ENCODE measurements at regions of chr20 and their contacts with region 1.

Region 1: DNA sequence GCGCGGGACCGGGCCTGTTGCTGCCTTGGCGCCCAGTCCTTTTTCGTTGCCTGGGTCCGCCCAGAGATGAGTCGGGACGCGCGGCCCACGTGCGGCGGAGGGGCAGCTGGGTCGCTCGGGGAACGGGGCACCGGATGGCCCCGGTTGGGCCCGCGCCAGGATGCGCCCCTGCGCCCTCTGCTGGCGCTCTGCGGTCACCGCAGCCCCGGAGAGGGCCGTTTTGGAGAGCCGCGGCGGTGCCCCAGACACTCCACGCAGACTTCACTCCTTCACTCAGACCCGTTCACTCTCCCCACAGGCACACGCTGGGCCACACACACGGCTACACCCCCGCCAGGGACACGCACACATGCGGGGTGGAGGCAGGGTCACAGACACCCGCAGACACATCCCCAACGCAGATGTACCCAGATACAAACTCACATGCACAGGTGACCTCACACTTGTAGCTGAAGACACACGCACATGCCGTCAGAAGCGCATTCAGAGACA is 38.8 kb downstream of the SRC start:
- DNase-seq: peak; percentile 81
- ATAC-seq: peak; percentile 96
- H3K4me3 Mint-ChIP-seq: peak overlapping the region; percentile 49
- H3K27ac Mint-ChIP-seq: peak overlapping the region; percentile 63
- H3K4me1 Mint-ChIP-seq: peaks cover 12% of the 10 kb centered on the region
- H3K27me3 Mint-ChIP-seq: peaks cover 5% of the 10 kb centered on the region
- CTCF ChIP-seq: peak; percentile 93

Region 2: DNA sequence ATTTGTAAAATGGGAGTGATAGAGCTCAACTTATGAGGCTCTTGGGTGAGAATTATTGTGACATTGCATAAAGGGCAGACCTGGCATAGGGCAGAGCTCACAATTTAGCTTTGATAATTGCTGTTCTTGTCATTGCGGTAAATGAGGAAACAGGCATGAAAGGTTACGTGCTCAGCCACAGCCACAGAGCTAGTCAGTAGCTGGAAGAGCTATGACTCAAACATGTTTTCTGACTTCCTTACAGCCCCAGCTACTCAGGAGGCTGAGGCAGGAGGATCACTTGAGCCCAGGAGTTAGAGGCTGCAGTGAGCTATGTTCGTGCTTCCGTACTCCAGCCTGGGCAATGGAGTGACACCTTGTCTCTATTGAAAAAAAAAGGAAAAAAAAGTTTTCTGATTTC is 119.6 kb before region 1 on chr20:
- CTCF ChIA-PET with region 1: interaction called, 28 read pairs
- POLR2A ChIA-PET with region 1: no interaction called
- intact Hi-C with region 1: loop called (anchors 5 kb)
- DNase-seq: peak; percentile 64
- ATAC-seq: peak; percentile 80
- H3K4me3 Mint-ChIP-seq: no peak overlapping the region
- H3K27ac Mint-ChIP-seq: no peak overlapping the region
- H3K4me1 Mint-ChIP-seq: no peaks in the 10 kb centered on the region
- H3K27me3 Mint-ChIP-seq: peaks cover 6% of the 10 kb centered on the region
- CTCF ChIP-seq: no peak

Region 3: GRCh38 chr20:37270576-37271420 is 113.9 kb before region 1 on chr20:
- CTCF ChIA-PET with region 1: interaction called, 28 read pairs
- POLR2A ChIA-PET with region 1: no interaction called
- intact Hi-C with region 1: loop called (anchors 5 kb)
- DNase-seq: no peak
- ATAC-seq: no peak
- H3K4me3 Mint-ChIP-seq: no peak overlapping the region
- H3K27ac Mint-ChIP-seq: no peak overlapping the region
- H3K4me1 Mint-ChIP-seq: no peaks in the 10 kb centered on the region
- H3K27me3 Mint-ChIP-seq: no peaks in the 10 kb centered on the region
- CTCF ChIP-seq: no peak

Region 4: DNA sequence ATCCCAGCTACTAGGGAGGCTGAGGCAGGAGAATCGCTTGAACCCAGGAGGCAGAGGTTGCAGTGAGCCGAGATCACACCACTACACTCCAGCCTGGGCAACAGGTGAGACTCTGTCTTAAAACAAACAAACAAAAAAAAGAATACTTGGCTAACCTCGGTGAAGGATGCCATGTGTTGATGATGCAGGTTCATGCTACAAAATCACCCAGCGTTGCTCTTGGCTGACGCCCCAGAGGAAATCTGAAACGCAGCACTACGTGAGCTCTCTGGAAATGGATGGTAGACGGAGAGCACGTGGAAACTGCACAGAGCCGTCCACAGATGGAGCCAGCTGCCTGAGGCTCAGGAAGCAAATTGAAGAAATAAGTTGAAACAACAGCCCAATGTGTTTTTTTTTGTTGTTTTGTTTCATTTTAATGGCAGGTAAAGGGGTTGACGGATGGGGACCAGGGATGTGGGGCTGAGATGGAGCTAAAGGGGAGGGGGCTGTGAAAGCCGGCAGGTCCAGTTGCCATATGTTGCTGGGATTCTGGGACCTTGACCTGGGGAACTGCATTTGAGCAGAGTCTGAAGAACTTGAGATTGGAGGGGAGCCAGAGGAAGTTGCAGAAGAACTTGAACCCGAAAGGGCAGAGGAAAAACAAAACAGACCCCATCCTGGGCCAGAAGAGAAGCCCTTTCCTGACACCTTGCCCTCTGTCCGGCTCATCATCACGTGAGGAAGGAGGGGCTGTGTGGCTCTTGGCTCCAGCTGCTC is 108.1 kb before region 1 on chr20:
- CTCF ChIA-PET with region 1: interaction called, 28 read pairs
- POLR2A ChIA-PET with region 1: no interaction called
- intact Hi-C with region 1: no loop called
- DNase-seq: peak; percentile 26
- ATAC-seq: peak; percentile 66
- H3K4me3 Mint-ChIP-seq: no peak overlapping the region
- H3K27ac Mint-ChIP-seq: no peak overlapping the region
- H3K4me1 Mint-ChIP-seq: peaks cover 5% of the 10 kb centered on the region
- H3K27me3 Mint-ChIP-seq: peaks cover 1% of the 10 kb centered on the region
- CTCF ChIP-seq: no peak

Region 5: DNA sequence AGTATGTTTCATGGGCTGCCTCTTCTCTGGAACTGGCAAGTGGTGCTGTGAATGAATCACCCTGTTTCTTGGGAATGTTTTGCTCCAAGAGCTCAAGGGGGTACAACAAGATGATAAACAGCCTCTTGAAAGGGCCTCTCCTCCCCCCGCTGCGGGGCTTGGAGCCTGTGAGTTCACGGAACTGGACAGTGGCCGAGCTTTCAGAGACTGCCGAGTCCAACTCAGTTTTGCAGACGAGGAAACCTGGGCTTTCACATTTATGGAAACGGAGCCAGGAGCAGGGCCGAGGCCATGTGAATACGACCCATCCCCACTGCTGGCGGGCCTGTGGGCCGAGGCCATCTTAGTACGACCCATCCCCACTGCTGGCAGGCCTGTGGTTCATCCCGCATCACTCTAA is 57.0 kb before region 1 on chr20:
- CTCF ChIA-PET with region 1: no interaction called
- POLR2A ChIA-PET with region 1: no interaction called
- intact Hi-C with region 1: no loop called
- DNase-seq: no peak
- ATAC-seq: no peak
- H3K4me3 Mint-ChIP-seq: no peak overlapping the region
- H3K27ac Mint-ChIP-seq: no peak overlapping the region
- H3K4me1 Mint-ChIP-seq: no peaks in the 10 kb centered on the region
- H3K27me3 Mint-ChIP-seq: no peaks in the 10 kb centered on the region
- CTCF ChIP-seq: no peak

Measured in activated CD8-positive, alpha-beta T cell treated with anti-CD3 and anti-CD28 coated beads for 36 hours (primary cell).